ENCODE measurements at regions of chr1 and their contacts with region 1.

Region 1: GRCh38 chr1:26602378-26602959 is 72.9 kb downstream of the RPS6KA1 start:
- DNase-seq: peak; percentile 74
- H3K27ac ChIP-seq: no peak overlapping the region
- CTCF ChIP-seq: peak; percentile 86

Region 2: DNA sequence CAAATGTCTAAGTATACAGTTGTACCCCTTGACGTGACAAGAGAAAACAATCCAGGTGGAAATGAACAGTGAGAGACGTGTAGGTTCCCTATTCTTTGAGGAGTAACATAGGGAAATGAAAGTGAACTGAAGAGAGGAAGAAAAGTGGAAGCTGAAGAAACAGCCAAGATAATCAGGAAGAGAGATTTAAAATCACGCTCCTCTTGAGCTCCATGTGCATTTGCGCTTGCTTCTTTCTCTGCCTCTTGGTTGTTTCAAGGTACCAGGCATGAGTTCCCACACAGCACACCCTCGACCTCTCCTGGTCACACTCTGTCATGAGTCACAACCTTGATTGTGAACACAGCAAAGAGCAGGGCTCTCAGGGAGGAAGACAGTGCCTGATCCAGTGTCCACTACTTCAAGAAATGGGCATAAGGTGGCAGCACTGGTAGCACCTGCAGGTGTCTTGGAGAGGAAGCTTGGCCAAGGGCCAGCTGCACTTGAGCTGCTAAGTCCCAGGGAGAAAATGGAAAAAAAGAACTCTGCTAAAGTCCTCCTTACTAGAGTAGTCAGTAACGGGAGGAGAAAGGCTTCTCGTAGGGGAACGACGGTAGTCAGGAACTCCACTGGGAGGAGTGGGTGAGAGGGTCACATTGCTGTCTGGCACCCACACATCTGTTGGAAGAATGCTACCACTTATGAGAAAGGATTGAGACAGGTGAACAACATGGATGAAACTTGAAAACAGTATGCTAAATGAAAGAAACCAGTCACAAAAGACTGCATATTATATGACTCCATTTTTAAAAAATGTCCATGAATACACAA is 75.0 kb after region 1 on chr1:
- CTCF ChIA-PET with region 1: interaction called, 21 read pairs
- POLR2A ChIA-PET with region 1: no interaction called
- DNase-seq: peak; percentile 83
- H3K27ac ChIP-seq: no peak overlapping the region
- CTCF ChIP-seq: peak; percentile 90

Region 3: GRCh38 chr1:26728645-26729044 is 126.2 kb after region 1 on chr1:
- CTCF ChIA-PET with region 1: interaction called, 12 read pairs
- POLR2A ChIA-PET with region 1: no interaction called
- DNase-seq: no peak
- H3K27ac ChIP-seq: no peak overlapping the region
- CTCF ChIP-seq: no peak

Region 4: GRCh38 chr1:26787706-26788514 is 185.4 kb after region 1 on chr1 and contains the start of gene PIGV:
- CTCF ChIA-PET with region 1: interaction called, 96 read pairs
- POLR2A ChIA-PET with region 1: no interaction called
- DNase-seq: peak; percentile 92
- H3K27ac ChIP-seq: peak within 1 kb of the TSS; percentile 98
- CTCF ChIP-seq: no peak

Region 5: DNA sequence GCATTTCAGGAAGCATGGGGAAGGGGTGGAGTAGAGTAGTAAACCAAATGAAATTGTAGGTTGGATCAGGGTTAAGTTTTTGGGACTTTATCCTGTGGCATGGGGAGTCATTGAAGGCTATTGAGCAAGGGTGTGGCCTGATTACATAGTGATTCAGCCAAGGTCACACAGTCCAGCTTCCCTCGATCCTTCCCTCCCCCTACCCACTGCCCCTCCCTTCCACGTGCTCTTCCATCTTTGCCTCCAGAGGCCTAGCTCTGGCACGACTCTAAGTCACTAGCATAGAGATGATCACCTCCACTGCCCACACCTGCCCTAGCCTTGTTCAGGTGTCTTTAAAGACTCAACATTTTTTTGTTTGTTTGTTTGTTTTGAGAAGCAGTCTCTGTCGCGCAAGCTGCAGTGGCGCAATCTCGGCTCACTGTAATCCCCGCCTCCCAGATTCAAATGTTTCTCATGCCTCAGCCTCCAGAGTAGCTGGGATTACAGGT is 589.6 kb after region 1 on chr1:
- CTCF ChIA-PET with region 1: no interaction called
- POLR2A ChIA-PET with region 1: no interaction called
- DNase-seq: peak; percentile 75
- H3K27ac ChIP-seq: peak overlapping the region; percentile 88
- CTCF ChIP-seq: no peak

Measured in RWPE1 (cell line).